ENCODE measurements at regions of chr12 and their contacts with region 1.

Region 1: GRCh38 chr12:23290627-23291330 is 658.7 kb downstream of the SOX5 start:
- DNase-seq: no peak

Region 2: DNA sequence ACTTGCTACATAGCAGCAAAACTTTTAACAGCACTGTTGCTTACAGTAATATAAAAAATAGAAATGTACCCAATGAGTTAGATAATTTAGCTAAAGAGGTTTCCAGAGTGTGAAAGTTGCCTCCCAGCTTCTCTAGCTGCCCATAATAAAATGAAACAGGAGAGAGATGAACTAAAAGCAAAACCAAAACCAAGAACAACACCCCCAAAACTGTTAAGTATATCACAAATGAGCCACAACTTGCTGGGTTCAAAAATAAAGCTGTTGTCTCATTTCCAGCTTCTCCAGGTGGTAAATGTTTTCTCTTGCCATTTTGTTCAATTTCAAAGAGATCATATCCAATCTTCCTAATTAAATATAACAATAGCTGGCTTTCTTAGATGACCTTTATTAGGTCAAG is 51.8 kb before region 1 on chr12:
- intact Hi-C with region 1: no loop called
- DNase-seq: no peak

Region 3: GRCh38 chr12:23335593-23335992 is 44.8 kb after region 1 on chr12:
- intact Hi-C with region 1: loop called in 1 of 2 experiments (anchors 2 kb)
- DNase-seq: no peak

Region 4: DNA sequence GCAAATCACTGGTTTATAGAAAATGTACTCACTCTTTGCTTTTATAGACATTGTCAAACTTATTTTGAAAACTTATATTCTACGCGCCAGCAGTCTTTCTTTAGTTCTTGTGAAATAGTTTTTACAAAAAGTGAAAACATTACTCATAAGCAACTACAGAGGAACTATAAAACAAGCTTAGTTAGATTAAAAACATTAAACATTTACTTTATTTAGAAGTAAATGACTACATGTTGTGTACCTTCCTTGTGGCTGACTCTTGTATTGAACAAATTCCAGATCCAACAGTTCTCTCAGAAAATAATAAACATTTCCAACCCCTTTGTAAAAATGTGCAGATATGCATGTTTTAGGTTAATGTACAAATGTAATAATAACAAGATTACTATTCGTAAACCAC is 460.1 kb after region 1 on chr12:
- intact Hi-C with region 1: no loop called
- DNase-seq: no peak

Measured in posterior vena cava (tissue), 2 donors.